ENCODE measurements at regions of chrX and their contacts with region 1.

Region 1: DNA sequence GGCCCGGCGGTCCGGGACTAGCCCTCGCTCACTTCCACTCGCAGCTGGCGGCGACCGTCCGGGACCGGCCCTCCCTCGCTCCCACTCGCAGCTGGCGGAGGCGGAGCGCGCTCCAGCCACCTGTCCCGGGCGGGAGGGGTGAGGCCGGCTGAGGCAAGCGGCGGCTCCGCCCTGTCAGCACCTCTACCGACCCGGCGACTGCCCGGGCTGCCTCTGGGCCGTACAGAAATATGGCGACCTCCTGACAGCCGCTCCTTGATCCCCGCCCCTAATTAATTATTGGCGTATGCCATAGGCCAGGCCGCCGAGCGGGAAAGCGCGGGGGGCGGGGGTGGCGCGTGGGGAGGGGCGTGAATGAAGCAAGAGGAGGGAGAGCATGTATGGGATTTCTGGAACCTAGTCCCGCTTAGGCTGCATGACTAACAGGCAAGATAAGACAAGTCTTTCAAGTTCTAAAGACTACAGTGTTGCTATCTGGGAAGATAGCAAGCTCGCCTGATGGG is at the start of gene MORC4:
- DNase-seq: peak; percentile 42
- ATAC-seq: peak; percentile 88
- H3K4me3 Mint-ChIP-seq: peak within 1 kb of the TSS; percentile 89
- H3K27ac Mint-ChIP-seq: no peak within 1 kb of the TSS
- H3K4me1 Mint-ChIP-seq: peaks cover 10% of the 10 kb centered on the region
- H3K27me3 Mint-ChIP-seq: no peaks in the 10 kb centered on the region
- CTCF ChIP-seq: no peak
- total RNA-seq, gene MORC4: 3.7 and 4.1 TPM in 2 replicates

Region 2: GRCh38 chrX:107054978-107055377 is 54.9 kb after region 1 on chrX:
- CTCF ChIA-PET with region 1: no interaction called
- POLR2A ChIA-PET with region 1: no interaction called
- intact Hi-C with region 1: no loop called
- DNase-seq: no peak
- ATAC-seq: no peak
- H3K4me3 Mint-ChIP-seq: no peak overlapping the region
- H3K27ac Mint-ChIP-seq: no peak overlapping the region
- H3K4me1 Mint-ChIP-seq: no peaks in the 10 kb centered on the region
- H3K27me3 Mint-ChIP-seq: no peaks in the 10 kb centered on the region
- CTCF ChIP-seq: no peak

Region 3: GRCh38 chrX:107118322-107119147 is 118.5 kb after region 1 on chrX and contains the start of gene RBM41:
- CTCF ChIA-PET with region 1: no interaction called
- POLR2A ChIA-PET with region 1: no interaction called
- intact Hi-C with region 1: loop called (anchors 1 kb)
- DNase-seq: peak; percentile 39
- ATAC-seq: peak; percentile 99
- H3K4me3 Mint-ChIP-seq: peak within 1 kb of the TSS; percentile 100
- H3K27ac Mint-ChIP-seq: peak within 1 kb of the TSS; percentile 96
- H3K4me1 Mint-ChIP-seq: peaks cover 26% of the 10 kb centered on the region
- H3K27me3 Mint-ChIP-seq: no peaks in the 10 kb centered on the region
- CTCF ChIP-seq: no peak
- total RNA-seq, gene RBM41: 16.5 and 18.5 TPM in 2 replicates

Region 4: GRCh38 chrX:107654872-107655761 is 655.1 kb after region 1 on chrX:
- CTCF ChIA-PET with region 1: interaction called, 3 read pairs
- POLR2A ChIA-PET with region 1: no interaction called
- intact Hi-C with region 1: loop called (anchors 10 kb)
- DNase-seq: peak; percentile 40
- ATAC-seq: peak; percentile 86
- H3K4me3 Mint-ChIP-seq: no peak overlapping the region
- H3K27ac Mint-ChIP-seq: no peak overlapping the region
- H3K4me1 Mint-ChIP-seq: peaks cover 10% of the 10 kb centered on the region
- H3K27me3 Mint-ChIP-seq: no peaks in the 10 kb centered on the region
- CTCF ChIP-seq: no peak